ENCODE measurements at regions of chr3 and their contacts with region 1.

Region 1: GRCh38 chr3:69691860-69692259 is 47.4 kb upstream of the MITF start:
- DNase-seq: no peak
- ATAC-seq: no peak
- H3K4me3 ChIP-seq: no peak overlapping the region
- H3K27ac ChIP-seq: no peak overlapping the region
- H3K4me1 ChIP-seq: no peaks in the 10 kb centered on the region
- H3K27me3 ChIP-seq: no peaks in the 10 kb centered on the region
- CTCF ChIP-seq: no peak
- POLR2A ChIP-seq: no peak

Region 2: DNA sequence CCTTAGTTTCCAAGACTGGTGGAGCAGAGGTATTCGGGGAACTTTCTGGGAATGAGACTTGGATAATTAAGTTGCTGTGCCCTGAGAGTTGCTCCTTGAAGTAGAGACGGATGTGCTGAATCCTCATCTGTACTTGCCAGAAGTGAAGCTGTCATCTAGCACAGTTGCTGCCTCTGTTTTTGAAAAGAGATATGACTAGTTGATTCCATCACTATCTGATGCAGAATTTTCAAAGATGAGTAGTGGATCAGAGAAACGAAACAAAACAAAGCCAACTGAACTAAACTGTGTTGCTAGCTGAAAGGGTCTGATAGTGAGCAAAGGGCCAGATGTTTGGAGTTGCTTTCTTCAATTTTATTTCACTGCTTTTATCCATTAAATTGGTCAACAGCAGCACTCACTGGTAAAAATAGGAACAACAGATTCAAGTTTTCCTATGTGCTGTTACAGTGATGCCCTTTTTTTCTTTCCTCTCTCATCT is 100.1 kb after region 1 on chr3:
- intact Hi-C with region 1: loop called (anchors 10 kb)
- DNase-seq: no peak
- ATAC-seq: no peak
- H3K4me3 ChIP-seq: no peak overlapping the region
- H3K27ac ChIP-seq: no peak overlapping the region
- H3K4me1 ChIP-seq: peaks cover 2% of the 10 kb centered on the region
- H3K27me3 ChIP-seq: no peaks in the 10 kb centered on the region
- CTCF ChIP-seq: peak in 5 of 7 experiments; percentile 31 to 55 (median 52)
- POLR2A ChIP-seq: no peak

Region 3: DNA sequence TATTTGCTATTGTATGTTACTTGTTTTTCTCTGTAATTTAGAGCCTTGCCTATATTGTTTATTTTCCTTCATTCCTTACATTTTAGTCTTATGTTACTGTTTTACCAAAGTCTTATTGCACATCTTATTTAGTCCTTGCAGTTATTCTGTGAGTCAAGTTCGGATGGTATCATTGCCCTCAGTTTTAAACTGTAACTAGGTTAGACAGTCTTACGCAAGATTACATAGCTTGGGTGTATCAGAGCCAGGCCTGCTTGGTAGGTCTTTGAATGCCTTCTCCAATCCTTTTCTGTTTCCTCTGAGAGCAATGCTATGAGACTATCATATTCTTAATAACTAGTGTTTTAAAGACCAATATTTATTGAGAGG is 249.9 kb after region 1 on chr3:
- intact Hi-C with region 1: loop called (anchors 5 kb)
- DNase-seq: no peak
- ATAC-seq: no peak
- H3K4me3 ChIP-seq: no peak overlapping the region
- H3K27ac ChIP-seq: no peak overlapping the region
- H3K4me1 ChIP-seq: no peaks in the 10 kb centered on the region
- H3K27me3 ChIP-seq: no peaks in the 10 kb centered on the region
- CTCF ChIP-seq: no peak
- POLR2A ChIP-seq: no peak